A549 (cell line): ENCODE measurements at regions of chr17 and their contacts with region 1.

Region 1: DNA sequence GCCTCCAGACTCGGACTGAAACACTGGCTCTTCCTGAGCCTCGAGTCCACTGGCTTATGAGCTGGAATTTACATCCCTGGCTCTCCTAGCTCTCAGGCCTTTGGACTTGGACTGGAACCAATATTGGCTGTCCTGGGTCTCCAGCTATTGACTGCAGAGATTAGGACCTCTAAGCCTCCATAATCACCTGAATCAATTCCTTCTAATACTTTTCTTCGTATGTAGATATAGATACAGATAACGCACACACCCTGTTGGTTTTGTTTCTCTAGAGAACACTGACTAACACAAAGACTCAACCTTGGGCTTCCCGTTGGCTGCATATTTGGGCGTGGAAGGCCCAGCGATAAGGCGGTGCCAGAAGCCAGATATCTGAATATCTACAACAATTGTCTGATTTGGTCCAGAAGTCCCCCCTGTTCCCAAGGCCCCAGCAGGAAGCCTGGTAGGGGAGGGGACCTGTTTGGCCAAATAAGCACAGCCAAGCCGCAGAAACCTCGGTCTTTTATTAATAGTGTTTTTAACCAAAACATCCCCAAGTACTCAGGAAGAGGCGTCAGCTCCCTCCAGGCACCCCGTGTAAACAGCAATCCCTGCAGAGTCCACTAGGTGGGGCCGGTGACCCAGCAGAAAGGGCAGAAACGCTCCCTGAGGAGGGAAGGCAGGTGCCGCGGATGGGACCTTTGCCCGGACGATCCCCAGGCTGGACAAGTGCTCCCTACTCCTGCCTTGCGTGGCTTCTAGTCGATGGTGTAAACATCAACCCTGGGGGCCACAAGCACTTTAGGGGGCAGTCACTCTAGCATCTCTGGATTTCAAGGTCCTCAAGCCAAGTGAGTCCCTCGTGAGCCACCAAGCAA is 57.0 kb downstream of the ABR start:
- DNase-seq: peak; percentile 71 to 91
- ATAC-seq: peak; percentile 72 to 94
- H3K4me3 ChIP-seq: no peak overlapping the region
- H3K27ac ChIP-seq: peak overlapping the region; percentile 31 to 44; a peak in 5 of 6 replicates
- H3K4me1 ChIP-seq: peaks cover 14% of the 10 kb centered on the region; the same call in 2 of the 3 replicates
- CTCF ChIP-seq: peak; percentile 92
- EP300 ChIP-seq: no peak
- POLR2A ChIP-seq: no peak
- RAD21 ChIP-seq: peak; percentile 92 to 93

Region 2: DNA sequence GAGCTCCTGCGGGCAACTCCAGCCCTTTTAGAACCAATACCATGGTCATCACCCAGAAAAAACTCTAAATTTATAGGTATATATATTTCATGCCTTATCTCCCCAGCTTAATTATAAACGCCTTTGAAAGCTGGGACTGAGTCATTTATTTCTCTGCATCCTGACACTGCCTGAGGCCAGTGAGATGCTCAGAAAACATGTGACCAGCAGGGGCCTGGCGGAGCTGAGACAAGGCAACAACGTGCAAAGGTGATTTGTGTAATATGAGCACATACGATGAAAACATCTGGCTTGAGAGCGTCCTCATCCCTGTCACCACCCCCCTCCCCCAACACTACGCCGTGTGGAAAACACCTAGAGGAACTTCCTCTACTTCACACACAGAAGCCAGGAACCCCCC is 165.9 kb before region 1 on chr17:
- CTCF ChIA-PET with region 1: no interaction called
- POLR2A ChIA-PET with region 1: no interaction called
- DNase-seq: peak; percentile 69 to 70
- ATAC-seq: peak; percentile 19 to 54; a peak in 4 of 6 replicates
- H3K4me3 ChIP-seq: no peak overlapping the region
- H3K27ac ChIP-seq: peak overlapping the region in 1 of 2 experiments; percentile 90; a peak in 3 of 6 replicates
- H3K4me1 ChIP-seq: peaks cover 42% of the 10 kb centered on the region
- CTCF ChIP-seq: no peak
- EP300 ChIP-seq: no peak
- POLR2A ChIP-seq: no peak
- RAD21 ChIP-seq: no peak

Region 3: DNA sequence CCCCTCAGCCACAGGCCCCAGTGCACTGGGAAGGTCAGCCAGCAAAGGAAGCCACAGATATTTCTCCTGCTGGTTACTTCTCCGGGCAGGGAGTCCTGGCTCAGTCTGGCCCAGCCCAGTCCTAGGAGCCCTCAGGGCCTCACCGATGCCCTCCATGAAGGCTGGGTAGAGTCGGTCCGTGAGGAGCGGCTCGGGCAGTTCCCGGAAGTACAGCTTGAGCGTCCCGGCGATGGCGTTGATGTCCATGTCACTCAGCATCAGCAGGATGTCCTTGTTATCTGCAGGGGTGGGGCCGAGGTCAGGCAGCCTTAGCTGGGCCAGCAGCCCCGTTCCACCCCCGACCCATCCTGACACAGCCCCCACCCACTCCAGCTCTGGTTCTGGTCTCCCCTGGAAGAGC is 112.2 kb before region 1 on chr17:
- CTCF ChIA-PET with region 1: no interaction called
- POLR2A ChIA-PET with region 1: no interaction called
- DNase-seq: no peak
- ATAC-seq: peak in 1 of 2 experiments; percentile 6; a peak in 3 of 6 replicates
- H3K4me3 ChIP-seq: no peak overlapping the region
- H3K27ac ChIP-seq: no peak overlapping the region
- H3K4me1 ChIP-seq: no peaks in the 10 kb centered on the region
- CTCF ChIP-seq: no peak
- EP300 ChIP-seq: no peak
- POLR2A ChIP-seq: no peak
- RAD21 ChIP-seq: no peak

Region 4: DNA sequence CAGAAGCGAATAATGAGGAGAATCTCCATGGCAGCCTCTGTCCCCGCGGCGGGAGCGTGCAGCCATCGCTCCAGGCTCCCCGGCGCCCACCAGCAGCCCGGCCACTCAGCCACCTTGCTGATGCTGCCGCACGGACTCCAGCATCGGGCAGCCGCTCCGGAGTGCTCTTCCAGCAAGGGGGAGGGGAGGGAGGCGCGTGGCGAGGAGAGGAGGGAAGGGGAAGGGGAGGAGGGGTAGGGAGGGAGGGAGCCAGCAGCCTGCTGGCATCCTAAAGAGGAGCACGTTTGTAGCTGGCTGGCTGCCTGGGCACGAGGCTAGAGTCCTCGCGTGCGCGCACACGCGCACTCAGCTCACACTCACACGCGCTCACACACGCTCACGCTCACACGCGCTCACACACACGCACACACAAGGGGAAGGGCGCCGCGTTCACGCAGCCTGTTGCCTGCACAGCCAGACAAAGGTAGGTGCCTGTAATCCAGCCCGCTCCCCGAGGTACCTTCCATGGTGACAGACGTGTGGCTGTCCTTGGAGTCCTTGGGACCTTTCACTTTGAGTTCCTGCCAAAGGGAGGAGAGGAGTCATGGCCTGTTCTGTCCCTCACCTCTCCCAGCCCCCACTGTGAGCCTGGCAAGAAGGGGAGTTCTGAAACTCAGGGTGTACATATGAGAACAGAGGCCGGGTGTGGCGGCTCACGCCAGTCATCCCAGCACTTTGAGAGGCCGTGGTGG is 43.8 kb before region 1 on chr17:
- CTCF ChIA-PET with region 1: interaction called, 11 read pairs
- POLR2A ChIA-PET with region 1: no interaction called
- DNase-seq: no peak
- ATAC-seq: no peak
- H3K4me3 ChIP-seq: no peak overlapping the region
- H3K27ac ChIP-seq: no peak overlapping the region; a peak in 1 of 6 replicates
- H3K4me1 ChIP-seq: peaks cover 34% of the 10 kb centered on the region
- CTCF ChIP-seq: no peak
- EP300 ChIP-seq: no peak
- POLR2A ChIP-seq: no peak
- RAD21 ChIP-seq: no peak

Region 5: GRCh38 chr17:1147661-1148060 is 24.9 kb after region 1 on chr17:
- CTCF ChIA-PET with region 1: interaction called, 335 read pairs
- POLR2A ChIA-PET with region 1: interaction called, 3 read pairs
- DNase-seq: peak; percentile 87 to 88
- ATAC-seq: peak; percentile 86 to 92
- H3K4me3 ChIP-seq: no peak overlapping the region
- H3K27ac ChIP-seq: peak overlapping the region in 1 of 2 experiments; percentile 39; a peak in 2 of 6 replicates
- H3K4me1 ChIP-seq: 0 out of 3 replicates have a peak, but pooled peaks cover 5% of the 10 kb centered on the region
- CTCF ChIP-seq: peak; percentile 74
- EP300 ChIP-seq: no peak
- POLR2A ChIP-seq: no peak
- RAD21 ChIP-seq: peak; percentile 86 to 93

Region 6: GRCh38 chr17:1170739-1171138 is 48.0 kb after region 1 on chr17:
- CTCF ChIA-PET with region 1: interaction called, 19 read pairs
- POLR2A ChIA-PET with region 1: no interaction called
- DNase-seq: no peak
- ATAC-seq: no peak
- H3K4me3 ChIP-seq: no peak overlapping the region
- H3K27ac ChIP-seq: no peak overlapping the region
- H3K4me1 ChIP-seq: no peaks in the 10 kb centered on the region
- CTCF ChIP-seq: peak; percentile 26; the same call in 2 of the 3 replicates
- EP300 ChIP-seq: no peak
- POLR2A ChIP-seq: no peak
- RAD21 ChIP-seq: peak in 1 of 2 experiments; percentile 46; a peak in 2 of 5 replicates

Region 7: DNA sequence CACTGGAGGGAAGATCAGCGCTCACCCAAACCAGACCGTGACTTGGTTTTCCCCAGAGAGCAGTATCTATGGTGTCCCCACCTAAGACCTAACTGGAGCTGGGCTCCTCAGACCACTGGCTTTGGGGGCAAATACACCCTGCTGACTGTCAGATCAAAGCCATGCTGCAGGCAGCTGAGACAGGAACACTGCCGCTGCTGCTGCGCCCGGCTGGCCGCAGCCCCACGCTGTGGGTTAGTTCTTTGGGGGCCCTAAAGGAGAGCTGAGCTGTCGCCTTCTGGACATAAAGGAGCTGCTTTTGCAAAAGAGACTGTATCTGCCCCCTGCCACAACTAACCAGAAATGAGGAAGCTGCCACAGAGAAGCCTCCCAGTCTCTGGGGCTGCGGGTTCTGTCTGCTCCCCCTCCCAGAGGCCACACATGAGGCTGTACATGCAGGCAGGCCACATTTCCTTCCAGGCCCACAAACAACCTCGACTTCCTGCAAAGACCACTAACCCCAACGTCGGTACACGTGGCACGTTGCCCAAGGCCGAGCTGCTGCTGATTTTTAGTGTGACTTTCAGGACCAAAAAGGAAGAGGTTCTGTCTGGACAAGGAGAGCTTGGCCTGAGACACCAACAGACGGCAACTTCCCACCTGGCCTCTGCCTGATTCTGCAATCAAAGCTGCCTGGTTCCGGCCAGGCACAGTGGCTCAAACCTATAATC is 75.2 kb after region 1 on chr17:
- CTCF ChIA-PET with region 1: interaction called, 324 read pairs
- POLR2A ChIA-PET with region 1: no interaction called
- DNase-seq: no peak
- ATAC-seq: peak; percentile 10 to 23; a peak in 3 of 6 replicates
- H3K4me3 ChIP-seq: no peak overlapping the region
- H3K27ac ChIP-seq: peak overlapping the region in 1 of 2 experiments; percentile 22; a peak in 1 of 6 replicates
- H3K4me1 ChIP-seq: no peaks in the 10 kb centered on the region
- CTCF ChIP-seq: no peak
- EP300 ChIP-seq: no peak
- POLR2A ChIP-seq: no peak
- RAD21 ChIP-seq: no peak